Pancreas (tissue), 10 donors: ENCODE measurements at regions of chr12 and their contacts with region 1.

Region 1: DNA sequence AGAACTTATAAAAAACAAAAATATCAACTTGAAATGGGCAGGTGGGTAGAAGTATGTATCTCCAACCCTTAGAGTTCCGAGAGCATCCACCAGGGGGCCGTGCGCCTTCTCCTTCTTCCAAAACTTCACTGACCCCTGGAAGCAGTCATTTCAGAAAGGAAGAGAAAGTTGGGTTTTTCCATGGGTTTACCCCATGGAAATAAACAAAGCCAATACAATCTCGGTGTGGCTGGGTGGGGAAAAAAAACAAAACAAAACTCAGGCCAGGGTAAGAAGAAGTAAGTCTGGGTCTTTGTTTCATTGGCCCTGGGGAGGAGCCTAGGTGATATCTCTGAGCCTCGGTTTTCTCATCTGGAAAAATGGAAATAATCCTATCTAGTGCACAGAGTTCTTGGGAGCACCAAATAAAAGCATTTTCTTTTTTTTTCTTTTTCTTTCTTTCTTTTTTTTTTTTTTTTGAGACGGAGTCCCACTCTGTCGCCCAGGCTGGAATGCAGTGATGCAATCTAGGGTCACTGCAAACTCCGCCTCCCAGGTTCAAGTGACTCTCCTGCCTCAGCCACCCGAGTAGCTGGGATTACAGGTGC is 33.6 kb upstream of the HNF1A start:
- DNase-seq: peak in 5 of 6 donors; percentile 33 to 86 (median 60)
- ATAC-seq: peak; percentile 71 to 90 (median 84)
- H3K4me3 ChIP-seq: no peak overlapping the region
- H3K27ac ChIP-seq: no peak overlapping the region
- H3K4me1 ChIP-seq: no peaks in the 10 kb centered on the region
- H3K27me3 ChIP-seq: no peaks in the 10 kb centered on the region
- CTCF ChIP-seq: peak; percentile 46 to 77 (median 66)

Region 2: DNA sequence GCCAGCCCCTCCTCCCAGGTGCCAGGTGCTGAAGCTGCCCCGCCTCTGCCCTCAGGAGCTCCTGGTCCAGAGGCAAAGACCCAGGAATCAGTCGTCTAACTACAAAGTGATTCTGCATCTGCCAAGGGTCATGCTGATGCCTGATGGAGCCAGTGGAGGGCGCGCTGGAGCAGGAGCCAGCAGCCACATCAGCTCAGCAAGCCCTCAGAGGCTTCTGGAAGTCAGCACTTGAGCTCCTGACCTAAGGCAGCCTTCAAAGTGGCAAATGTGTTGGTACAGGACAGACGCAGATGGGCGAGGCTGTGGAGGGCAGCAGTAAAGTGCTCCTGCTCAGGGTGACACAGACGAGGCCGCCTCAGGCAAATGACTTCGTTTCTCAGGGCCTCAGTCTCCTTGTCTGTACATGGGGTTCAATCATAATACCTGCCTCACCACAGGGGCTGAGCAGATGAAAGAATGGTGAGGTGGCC is 60.6 kb after region 1 on chr12:
- intact Hi-C with region 1: loop called in 2 of 3 experiments (anchors 5 to 10 kb)
- DNase-seq: no peak
- ATAC-seq: peak in 3 of 4 donors; percentile 57 to 64 (median 59)
- H3K4me3 ChIP-seq: no peak overlapping the region
- H3K27ac ChIP-seq: no peak overlapping the region
- H3K4me1 ChIP-seq: no peaks in the 10 kb centered on the region
- H3K27me3 ChIP-seq: no peaks in the 10 kb centered on the region
- CTCF ChIP-seq: peak; percentile 13 to 34 (median 24)

Region 3: DNA sequence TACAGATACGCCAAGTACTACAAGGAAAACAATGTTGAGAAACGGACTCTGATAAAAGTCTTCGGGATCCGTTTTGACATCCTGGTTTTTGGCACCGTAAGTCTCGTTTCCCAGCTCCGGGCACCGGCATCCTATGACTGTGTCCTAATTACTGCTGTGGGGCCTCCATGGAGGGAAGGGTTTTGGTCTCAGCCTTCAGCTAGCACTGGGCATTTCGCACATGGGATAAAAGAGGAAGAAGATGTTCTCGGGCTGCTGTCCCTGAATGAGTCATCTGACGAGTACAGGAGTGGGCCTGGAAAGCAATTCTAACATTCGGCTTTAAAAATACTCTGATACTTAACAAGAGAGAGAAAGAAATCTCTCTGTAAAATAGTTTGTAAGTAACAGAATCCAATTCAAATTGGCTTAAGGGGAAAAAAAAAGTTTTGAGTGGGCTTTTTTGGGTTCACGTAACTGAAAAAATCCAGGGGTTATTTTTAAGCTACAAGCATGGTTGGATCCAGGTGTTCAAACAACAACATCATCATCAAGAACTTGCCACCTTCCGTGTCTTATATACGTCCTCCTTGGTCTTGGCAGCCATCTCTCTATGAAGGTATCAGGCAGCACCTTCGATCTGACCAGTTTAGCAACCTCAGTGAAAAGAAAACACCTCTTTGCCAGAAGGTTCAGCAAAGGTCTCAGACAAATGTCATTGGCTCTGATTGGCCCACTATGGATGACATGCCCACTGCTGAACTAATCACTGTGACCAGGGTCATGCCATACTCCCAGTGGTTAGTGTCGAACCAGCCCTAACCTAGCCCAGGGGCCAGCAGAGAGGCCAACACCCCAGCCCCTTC is 230.9 kb after region 1 on chr12:
- intact Hi-C with region 1: no loop called
- DNase-seq: peak in 1 of 6 donors; percentile 26
- ATAC-seq: peak; percentile 25 to 47 (median 40)
- H3K4me3 ChIP-seq: no peak overlapping the region
- H3K27ac ChIP-seq: no peak overlapping the region
- H3K4me1 ChIP-seq: peaks cover 6 to 19% (median 9%) of the 10 kb centered on the region in 3 donors
- H3K27me3 ChIP-seq: no peaks in the 10 kb centered on the region
- CTCF ChIP-seq: no peak